H1 (cell line): ENCODE measurements at regions of chr11 and their contacts with region 1.

Region 1: DNA sequence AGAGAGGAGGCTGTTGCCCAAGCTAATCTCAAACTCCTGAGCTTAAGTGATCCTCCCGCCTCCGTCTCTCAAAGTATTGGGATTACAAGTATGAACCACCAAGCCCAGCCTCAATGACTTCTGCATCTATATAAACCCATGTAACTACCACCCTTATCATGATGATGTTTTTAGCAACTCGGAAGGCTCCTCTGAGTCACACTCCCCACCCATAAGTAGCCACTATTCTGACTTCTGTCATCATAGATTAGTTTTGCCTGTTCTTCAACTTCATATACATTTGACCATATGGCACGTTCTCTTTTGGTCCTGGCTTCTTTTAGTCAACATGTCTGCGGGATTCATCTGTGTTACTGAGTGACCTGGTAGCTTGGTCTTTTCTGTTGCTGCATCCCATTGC is 6.4 kb upstream of the FOSL1 start:
- DNase-seq: no peak
- H3K4me3 ChIP-seq: no peak overlapping the region
- H3K27ac ChIP-seq: no peak overlapping the region
- H3K4me1 ChIP-seq: peaks cover 0 to 6% (median 2%) of the 10 kb centered on the region in 4 experiments; a peak in 4 of 7 replicates
- H3K27me3 ChIP-seq: peaks cover 4 to 24% (median 15%) of the 10 kb centered on the region in 4 experiments
- CTCF ChIP-seq: no peak
- EP300 ChIP-seq: no peak
- POLR2A ChIP-seq: no peak
- RAD21 ChIP-seq: no peak

Region 2: GRCh38 chr11:65919146-65920033 is 12.8 kb after region 1 on chr11 and contains the start of gene DRAP1:
- CTCF ChIA-PET with region 1: interaction called, 11 read pairs
- POLR2A ChIA-PET with region 1: interaction called, 10 read pairs
- DNase-seq: peak; percentile 85 to 95
- H3K4me3 ChIP-seq: peak within 1 kb of the TSS; percentile 91 to 98 (median 94)
- H3K27ac ChIP-seq: peak within 1 kb of the TSS; percentile 80
- H3K4me1 ChIP-seq: peaks cover 0 to 22% (median 13%) of the 10 kb centered on the region in 4 experiments; a peak in 4 of 7 replicates
- H3K27me3 ChIP-seq: no peaks in the 10 kb centered on the region
- CTCF ChIP-seq: no peak
- EP300 ChIP-seq: peak in 1 of 2 experiments; percentile 71; a peak in 1 of 3 replicates
- POLR2A ChIP-seq: peak; percentile 46 to 58
- RAD21 ChIP-seq: peak in 1 of 2 experiments; percentile 29; a peak in 2 of 4 replicates
- total RNA-seq, gene DRAP1: 98.7 and 108 TPM in 2 replicates